ENCODE measurements at regions of chr17 and their contacts with region 1.

Region 1: DNA sequence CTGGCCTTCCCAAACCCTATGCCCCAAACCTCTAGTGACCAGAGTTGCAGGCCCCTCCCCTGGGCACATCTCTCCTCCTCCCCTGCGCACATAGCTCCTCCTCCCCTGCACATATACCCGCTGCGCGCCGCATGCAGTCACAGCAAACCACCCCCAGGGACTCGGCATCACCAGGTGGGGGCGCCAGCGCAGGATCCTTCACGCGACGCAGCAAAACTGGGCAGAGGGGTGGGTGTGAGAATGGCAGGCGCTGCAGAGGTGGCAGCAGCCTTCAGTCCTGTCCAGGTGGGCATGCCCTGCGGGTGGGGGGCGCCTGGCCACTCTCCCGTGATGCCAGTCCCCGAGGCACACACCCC is 5.6 kb downstream of the CORO6 start:
- DNase-seq: peak; percentile 98
- ATAC-seq: peak; percentile 82
- H3K4me3 Mint-ChIP-seq: peak overlapping the region; percentile 75
- H3K27ac Mint-ChIP-seq: peak overlapping the region; percentile 89
- H3K4me1 Mint-ChIP-seq: peaks cover 47% of the 10 kb centered on the region
- H3K27me3 Mint-ChIP-seq: peaks cover 2% of the 10 kb centered on the region

Region 2: GRCh38 chr17:29369831-29370735 is 247.0 kb before region 1 on chr17:
- CTCF ChIA-PET with region 1: interaction called, 10 read pairs
- POLR2A ChIA-PET with region 1: no interaction called
- intact Hi-C with region 1: no loop called
- DNase-seq: peak; percentile 66
- ATAC-seq: peak; percentile 93
- H3K4me3 Mint-ChIP-seq: no peak overlapping the region
- H3K27ac Mint-ChIP-seq: no peak overlapping the region
- H3K4me1 Mint-ChIP-seq: no peaks in the 10 kb centered on the region
- H3K27me3 Mint-ChIP-seq: no peaks in the 10 kb centered on the region

Region 3: DNA sequence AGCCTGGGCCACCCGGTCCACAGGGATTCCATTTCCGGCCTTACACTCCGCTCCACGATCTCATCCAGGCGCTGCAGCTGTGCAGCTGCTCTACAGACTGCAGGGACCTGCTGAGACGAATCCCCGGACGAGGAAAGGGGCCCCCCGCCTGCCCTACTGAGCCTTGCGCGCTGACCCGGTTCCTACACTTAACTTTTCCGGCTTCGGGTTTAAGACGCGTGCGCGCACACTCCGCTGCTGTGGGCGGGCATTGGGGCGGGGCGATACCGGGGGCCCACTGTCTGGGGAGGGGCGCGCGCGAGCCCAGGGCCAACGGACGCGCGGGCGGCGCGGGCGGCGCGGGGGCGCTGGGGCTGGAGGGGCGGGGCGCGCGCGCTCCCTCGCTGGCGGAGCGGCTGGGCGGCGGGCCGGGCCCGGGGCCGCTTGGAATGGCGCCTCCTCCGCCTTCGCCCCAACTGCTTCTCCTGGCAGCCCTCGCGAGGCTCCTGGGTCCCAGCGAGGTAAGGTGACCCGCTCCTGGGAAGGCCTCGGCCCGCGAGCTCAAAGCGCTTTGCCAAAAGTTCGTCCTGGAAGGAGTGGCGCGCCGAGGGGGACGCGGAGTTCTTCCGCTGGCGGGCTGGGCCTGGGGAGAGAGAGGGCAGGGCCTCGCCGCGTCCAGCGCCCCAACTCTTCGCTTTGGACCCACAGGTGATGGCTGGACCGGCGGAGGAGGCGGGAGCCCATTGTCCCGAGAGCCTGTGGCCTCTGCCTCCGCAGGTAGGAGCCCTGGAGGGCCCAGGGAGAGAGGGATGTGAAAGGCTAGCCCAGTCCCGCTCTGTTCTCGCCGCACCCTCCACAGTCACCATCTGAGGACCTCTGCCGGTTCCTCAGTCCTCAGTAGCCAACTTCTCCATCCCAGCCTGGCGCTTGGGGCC is 48.5 kb before region 1 on chr17 and contains the start of gene TP53I13:
- CTCF ChIA-PET with region 1: interaction called, 93 read pairs
- POLR2A ChIA-PET with region 1: interaction called, 11 read pairs
- intact Hi-C with region 1: loop called (anchors 1 to 2 kb)
- DNase-seq: peak; percentile 96
- ATAC-seq: peak; percentile 64
- H3K4me3 Mint-ChIP-seq: peak within 1 kb of the TSS; percentile 97
- H3K27ac Mint-ChIP-seq: peak within 1 kb of the TSS; percentile 96
- H3K4me1 Mint-ChIP-seq: peaks cover 30% of the 10 kb centered on the region
- H3K27me3 Mint-ChIP-seq: no peaks in the 10 kb centered on the region
- total RNA-seq, gene TP53I13: 37.7 to 41.5 TPM

Region 4: DNA sequence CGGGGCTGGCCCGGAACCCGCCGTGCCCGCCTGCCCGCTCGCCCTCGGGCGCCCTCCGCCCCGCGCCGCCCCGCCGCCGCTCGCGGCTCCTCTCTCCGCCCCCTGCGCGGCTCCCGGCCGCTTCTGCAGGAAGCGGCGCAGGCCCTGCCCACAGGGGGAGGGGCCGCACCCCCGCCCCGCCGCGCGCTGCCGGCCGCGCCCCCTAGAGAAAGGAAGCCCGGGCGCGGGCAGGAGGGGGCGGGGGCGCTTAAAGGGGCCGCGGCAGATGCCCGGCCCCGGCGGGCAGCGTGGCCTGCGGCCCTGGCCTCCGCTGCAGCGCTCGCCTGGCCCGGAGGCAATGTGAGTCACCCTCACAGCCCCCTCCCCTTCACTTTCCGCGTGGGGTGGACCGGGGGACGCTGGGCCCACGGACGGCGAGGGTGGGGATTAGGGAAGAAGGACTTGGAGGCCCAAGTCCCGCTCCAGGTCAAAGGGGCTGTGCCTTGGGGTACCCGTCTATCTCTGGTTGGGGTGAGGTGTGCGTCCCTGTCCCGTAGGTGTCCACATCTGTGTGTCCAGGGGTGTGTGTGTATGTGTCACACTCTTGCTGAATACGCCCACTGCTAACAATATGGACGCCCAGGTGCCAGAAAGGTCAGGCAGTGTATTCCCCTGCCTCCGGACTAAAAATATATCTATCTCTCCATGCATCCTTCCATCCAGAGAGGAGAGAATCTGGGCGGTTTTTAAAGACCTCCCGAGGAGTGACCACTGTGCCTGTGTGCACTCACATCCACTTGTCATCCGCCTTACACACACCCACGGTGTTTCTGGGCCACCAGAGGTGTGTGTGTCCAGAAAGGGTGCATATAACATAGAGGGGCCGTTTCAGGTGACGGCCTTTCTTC is 27.3 kb before region 1 on chr17 and contains the start of gene GIT1:
- CTCF ChIA-PET with region 1: interaction called, 79 read pairs
- POLR2A ChIA-PET with region 1: interaction called, 10 read pairs
- intact Hi-C with region 1: loop called (anchors 1 kb)
- DNase-seq: peak; percentile 92
- ATAC-seq: peak; percentile 69
- H3K4me3 Mint-ChIP-seq: peak within 1 kb of the TSS; percentile 94
- H3K27ac Mint-ChIP-seq: peak within 1 kb of the TSS; percentile 92
- H3K4me1 Mint-ChIP-seq: peaks cover 64% of the 10 kb centered on the region
- H3K27me3 Mint-ChIP-seq: no peaks in the 10 kb centered on the region
- total RNA-seq, gene GIT1: 60.5 to 74.1 TPM

Region 5: DNA sequence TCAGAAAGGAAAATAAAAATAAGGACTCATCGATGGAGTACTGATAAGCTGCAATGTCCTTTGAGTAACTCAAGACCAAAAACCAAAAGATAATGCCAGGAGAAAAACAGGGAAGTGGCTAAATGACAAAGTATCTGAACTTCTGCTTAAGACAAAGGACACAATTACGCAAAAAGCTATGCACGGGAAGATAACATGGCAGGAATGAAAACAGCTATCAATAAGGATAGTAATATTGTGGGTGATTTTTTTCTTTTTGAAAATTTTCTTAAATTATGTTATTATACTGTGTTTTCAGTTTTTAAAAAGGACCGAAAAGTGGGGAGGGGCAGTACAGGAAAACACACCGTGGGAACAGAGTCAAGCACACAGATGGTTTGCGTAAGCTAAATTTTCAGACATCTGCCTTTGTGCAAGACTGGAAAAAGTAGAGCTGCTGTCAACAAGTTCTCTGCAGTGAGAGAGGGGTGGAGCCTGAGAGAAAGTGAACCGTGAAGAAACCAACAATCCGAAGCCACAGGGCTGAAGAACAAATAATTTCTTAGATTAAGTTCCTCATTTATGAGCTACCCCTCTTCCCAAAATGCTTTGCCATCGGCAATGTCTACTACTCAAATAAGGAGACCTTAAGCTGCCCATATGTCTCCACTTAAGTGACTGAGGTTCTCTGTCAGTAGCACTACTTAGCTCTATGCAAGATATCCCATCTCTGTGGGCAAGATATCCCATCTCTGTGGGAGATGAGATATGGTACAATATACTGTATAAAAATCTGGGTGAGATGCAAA is 105.5 kb after region 1 on chr17:
- CTCF ChIA-PET with region 1: interaction called, 14 read pairs
- POLR2A ChIA-PET with region 1: interaction called, 3 read pairs
- intact Hi-C with region 1: no loop called
- DNase-seq: peak; percentile 38
- ATAC-seq: peak; percentile 50
- H3K4me3 Mint-ChIP-seq: peak overlapping the region; percentile 47
- H3K27ac Mint-ChIP-seq: peak overlapping the region; percentile 82
- H3K4me1 Mint-ChIP-seq: peaks cover 78% of the 10 kb centered on the region
- H3K27me3 Mint-ChIP-seq: no peaks in the 10 kb centered on the region

Region 6: GRCh38 chr17:29777663-29778062 is 160.6 kb after region 1 on chr17:
- CTCF ChIA-PET with region 1: interaction called, 31 read pairs
- POLR2A ChIA-PET with region 1: interaction called, 7 read pairs
- intact Hi-C with region 1: loop called in 1 of 2 experiments (anchors 1 kb)
- DNase-seq: no peak
- ATAC-seq: no peak
- H3K4me3 Mint-ChIP-seq: no peak overlapping the region
- H3K27ac Mint-ChIP-seq: no peak overlapping the region
- H3K4me1 Mint-ChIP-seq: peaks cover 8% of the 10 kb centered on the region
- H3K27me3 Mint-ChIP-seq: no peaks in the 10 kb centered on the region

Region 7: DNA sequence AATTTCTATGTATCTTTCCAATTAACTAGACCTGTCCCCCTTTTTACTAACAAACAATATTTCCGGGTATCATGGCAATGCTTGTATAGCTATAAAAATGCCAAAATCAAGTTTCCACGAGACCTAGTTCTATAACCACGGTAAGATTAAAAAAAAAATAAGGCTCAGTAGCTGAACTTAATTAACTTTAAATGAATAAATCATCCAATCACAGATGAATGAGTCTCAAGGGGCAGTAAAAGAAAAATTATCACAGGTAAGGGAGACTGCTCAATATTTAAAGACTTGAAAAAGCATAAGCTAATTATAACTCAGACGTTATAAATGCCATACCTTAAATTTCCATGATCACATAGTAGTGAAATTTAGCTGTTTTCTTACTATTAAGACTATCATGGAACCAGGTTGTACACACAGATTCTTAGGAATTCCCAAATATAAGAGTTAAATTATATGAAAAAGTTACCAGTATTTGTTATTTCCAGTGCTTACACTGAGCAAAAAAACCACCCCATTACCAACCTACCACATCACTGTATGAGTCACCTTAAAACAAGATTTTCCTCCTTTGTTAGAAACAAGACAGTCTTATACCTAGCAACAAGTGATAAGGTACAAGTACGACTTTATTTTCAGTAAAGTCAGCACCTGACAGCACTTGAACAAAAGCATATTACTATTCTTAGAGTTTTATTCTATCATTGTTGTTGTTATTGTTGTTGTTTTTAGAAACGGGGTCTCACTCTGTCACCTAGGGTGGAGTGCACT is 292.3 kb after region 1 on chr17:
- CTCF ChIA-PET with region 1: no interaction called
- POLR2A ChIA-PET with region 1: no interaction called
- intact Hi-C with region 1: no loop called
- DNase-seq: no peak
- ATAC-seq: peak; percentile 93
- H3K4me3 Mint-ChIP-seq: no peak overlapping the region
- H3K27ac Mint-ChIP-seq: peak overlapping the region; percentile 19
- H3K4me1 Mint-ChIP-seq: peaks cover 32% of the 10 kb centered on the region
- H3K27me3 Mint-ChIP-seq: no peaks in the 10 kb centered on the region